ENCODE measurements at regions of chr1 and their contacts with region 1.

Region 1: DNA sequence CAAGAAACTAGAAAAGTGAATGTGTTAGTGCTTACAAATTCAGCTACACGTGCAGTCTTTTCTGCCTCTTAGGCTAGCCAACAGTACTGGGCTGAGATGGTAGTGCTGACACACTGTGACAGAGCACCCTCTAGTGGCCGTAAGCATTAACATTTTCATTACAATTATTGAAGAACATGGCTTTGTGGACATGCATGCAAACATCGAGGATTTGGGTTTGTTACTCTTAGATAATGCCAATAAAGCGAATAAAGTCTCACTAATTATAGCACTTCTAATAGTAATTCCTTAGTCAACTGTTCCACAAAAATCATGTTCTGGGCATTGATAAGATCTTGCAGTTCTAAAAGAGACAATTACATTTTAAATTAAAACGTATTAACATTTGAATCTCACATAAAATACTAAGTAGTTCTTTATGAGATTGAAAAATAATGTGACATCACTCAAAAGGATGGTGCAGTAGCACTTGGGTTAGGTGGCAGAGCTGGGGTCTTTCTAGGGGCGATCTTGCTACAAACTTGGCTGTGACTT is 47.1 kb downstream of the MYSM1 start:
- DNase-seq: no peak
- H3K4me3 ChIP-seq: no peak overlapping the region
- H3K27ac ChIP-seq: no peak overlapping the region
- H3K4me1 ChIP-seq: 0 out of 7 replicates have a peak, but pooled peaks cover 0 to 3% (median 0%) of the 10 kb centered on the region in 4 experiments
- H3K27me3 ChIP-seq: peaks cover 0 to 1% (median 0%) of the 10 kb centered on the region in 4 experiments; a peak in 1 of 7 replicates
- CTCF ChIP-seq: peak; percentile 31 to 88 (median 73)
- EP300 ChIP-seq: no peak
- POLR2A ChIP-seq: no peak
- RAD21 ChIP-seq: peak; percentile 91 to 95

Region 2: DNA sequence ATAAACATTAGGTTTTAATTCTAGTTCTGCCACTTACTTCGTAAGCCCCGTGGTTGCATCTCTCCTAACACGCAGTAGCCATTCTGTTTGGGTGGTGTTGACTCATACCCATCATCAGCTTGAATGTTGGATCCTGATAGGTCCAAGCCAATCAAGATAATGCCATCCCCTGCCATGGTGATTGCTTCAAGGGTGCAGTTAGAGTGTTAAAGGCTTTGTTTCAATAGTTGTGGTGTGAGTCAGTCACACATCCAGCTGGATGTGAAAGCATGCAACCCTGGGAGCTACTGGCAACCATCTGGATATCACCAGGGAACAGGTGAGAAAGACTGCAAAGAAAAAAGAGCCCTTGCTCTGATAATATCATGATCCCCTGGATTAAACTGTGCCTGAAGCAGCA is 175.3 kb before region 1 on chr1:
- CTCF ChIA-PET with region 1: no interaction called
- POLR2A ChIA-PET with region 1: no interaction called
- DNase-seq: no peak
- H3K4me3 ChIP-seq: no peak overlapping the region
- H3K27ac ChIP-seq: no peak overlapping the region
- H3K4me1 ChIP-seq: no peaks in the 10 kb centered on the region
- H3K27me3 ChIP-seq: 0 out of 7 replicates have a peak, but pooled peaks cover 0 to 3% (median 0%) of the 10 kb centered on the region in 4 experiments
- CTCF ChIP-seq: no peak
- EP300 ChIP-seq: no peak
- POLR2A ChIP-seq: no peak
- RAD21 ChIP-seq: no peak

Region 3: GRCh38 chr1:58515794-58516401 is 136.8 kb before region 1 on chr1:
- CTCF ChIA-PET with region 1: interaction called, 39 read pairs
- POLR2A ChIA-PET with region 1: interaction called, 3 read pairs
- DNase-seq: peak in 1 of 2 experiments; percentile 7
- H3K4me3 ChIP-seq: no peak overlapping the region
- H3K27ac ChIP-seq: no peak overlapping the region
- H3K4me1 ChIP-seq: no peaks in the 10 kb centered on the region
- H3K27me3 ChIP-seq: peaks cover 0 to 1% (median 0%) of the 10 kb centered on the region in 4 experiments; a peak in 1 of 7 replicates
- CTCF ChIP-seq: peak in 2 of 3 experiments; percentile 62 to 63; a peak in 3 of 4 replicates
- EP300 ChIP-seq: no peak
- POLR2A ChIP-seq: no peak
- RAD21 ChIP-seq: peak; percentile 86 to 87

Region 4: GRCh38 chr1:58568271-58568860 is 84.4 kb before region 1 on chr1:
- CTCF ChIA-PET with region 1: interaction called, 19 read pairs
- POLR2A ChIA-PET with region 1: no interaction called
- DNase-seq: no peak
- H3K4me3 ChIP-seq: no peak overlapping the region
- H3K27ac ChIP-seq: no peak overlapping the region
- H3K4me1 ChIP-seq: peaks cover 0 to 6% (median 0%) of the 10 kb centered on the region in 4 experiments; a peak in 4 of 7 replicates
- H3K27me3 ChIP-seq: no peaks in the 10 kb centered on the region
- CTCF ChIP-seq: no peak
- EP300 ChIP-seq: no peak
- POLR2A ChIP-seq: no peak
- RAD21 ChIP-seq: no peak

Region 5: GRCh38 chr1:58618303-58618702 is 34.4 kb before region 1 on chr1:
- CTCF ChIA-PET with region 1: interaction called, 13 read pairs
- POLR2A ChIA-PET with region 1: no interaction called
- DNase-seq: no peak
- H3K4me3 ChIP-seq: no peak overlapping the region
- H3K27ac ChIP-seq: no peak overlapping the region
- H3K4me1 ChIP-seq: peaks cover 0 to 11% (median 3%) of the 10 kb centered on the region in 4 experiments; a peak in 5 of 7 replicates
- H3K27me3 ChIP-seq: no peaks in the 10 kb centered on the region
- CTCF ChIP-seq: no peak
- EP300 ChIP-seq: no peak
- POLR2A ChIP-seq: no peak
- RAD21 ChIP-seq: no peak

Region 6: GRCh38 chr1:58633121-58633520 is 19.6 kb before region 1 on chr1:
- CTCF ChIA-PET with region 1: interaction called, 24 read pairs
- POLR2A ChIA-PET with region 1: no interaction called
- DNase-seq: no peak
- H3K4me3 ChIP-seq: no peak overlapping the region
- H3K27ac ChIP-seq: no peak overlapping the region
- H3K4me1 ChIP-seq: no peaks in the 10 kb centered on the region
- H3K27me3 ChIP-seq: no peaks in the 10 kb centered on the region
- CTCF ChIP-seq: no peak
- EP300 ChIP-seq: no peak
- POLR2A ChIP-seq: no peak
- RAD21 ChIP-seq: no peak

Region 7: GRCh38 chr1:58664881-58665280 is 12.2 kb after region 1 on chr1:
- CTCF ChIA-PET with region 1: interaction called, 15 read pairs
- POLR2A ChIA-PET with region 1: interaction called, 3 read pairs
- DNase-seq: no peak
- H3K4me3 ChIP-seq: no peak overlapping the region
- H3K27ac ChIP-seq: no peak overlapping the region
- H3K4me1 ChIP-seq: no peaks in the 10 kb centered on the region
- H3K27me3 ChIP-seq: no peaks in the 10 kb centered on the region
- CTCF ChIP-seq: no peak
- EP300 ChIP-seq: no peak
- POLR2A ChIP-seq: no peak
- RAD21 ChIP-seq: no peak

Region 8: DNA sequence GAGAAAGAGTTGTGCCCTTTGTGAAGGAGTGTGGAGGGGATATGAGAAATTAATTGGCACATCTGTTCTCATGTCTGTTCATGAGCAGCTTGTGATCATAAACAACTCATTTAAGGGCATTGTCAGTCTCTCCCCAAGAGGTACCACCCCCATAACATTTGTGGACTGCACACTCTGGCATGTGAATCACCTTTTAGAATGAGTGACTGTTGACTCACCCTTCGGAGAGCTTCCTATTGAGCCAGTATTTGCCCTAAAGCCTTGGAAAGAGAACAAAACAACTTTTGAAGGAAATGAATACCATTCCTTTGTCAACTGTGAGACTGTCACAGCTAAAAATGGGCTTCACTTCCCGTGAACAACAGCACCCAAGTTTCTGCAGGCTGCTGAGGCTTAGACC is 74.6 kb after region 1 on chr1:
- CTCF ChIA-PET with region 1: no interaction called
- POLR2A ChIA-PET with region 1: no interaction called
- DNase-seq: no peak
- H3K4me3 ChIP-seq: no peak overlapping the region
- H3K27ac ChIP-seq: no peak overlapping the region
- H3K4me1 ChIP-seq: peaks cover 0 to 4% (median 0%) of the 10 kb centered on the region in 4 experiments; a peak in 1 of 7 replicates
- H3K27me3 ChIP-seq: no peaks in the 10 kb centered on the region
- CTCF ChIP-seq: no peak
- EP300 ChIP-seq: no peak
- POLR2A ChIP-seq: no peak
- RAD21 ChIP-seq: no peak